A673 (cell line): ENCODE measurements at regions of chr1 and their contacts with region 1.

Region 1: GRCh38 chr1:19113697-19114092 is 96.4 kb downstream of the UBR4 start:
- DNase-seq: peak; percentile 48
- H3K4me3 ChIP-seq: no peak overlapping the region
- H3K27ac ChIP-seq: no peak overlapping the region
- H3K4me1 ChIP-seq: no peaks in the 10 kb centered on the region
- H3K27me3 ChIP-seq: no peaks in the 10 kb centered on the region
- CTCF ChIP-seq: peak; percentile 49

Region 2: DNA sequence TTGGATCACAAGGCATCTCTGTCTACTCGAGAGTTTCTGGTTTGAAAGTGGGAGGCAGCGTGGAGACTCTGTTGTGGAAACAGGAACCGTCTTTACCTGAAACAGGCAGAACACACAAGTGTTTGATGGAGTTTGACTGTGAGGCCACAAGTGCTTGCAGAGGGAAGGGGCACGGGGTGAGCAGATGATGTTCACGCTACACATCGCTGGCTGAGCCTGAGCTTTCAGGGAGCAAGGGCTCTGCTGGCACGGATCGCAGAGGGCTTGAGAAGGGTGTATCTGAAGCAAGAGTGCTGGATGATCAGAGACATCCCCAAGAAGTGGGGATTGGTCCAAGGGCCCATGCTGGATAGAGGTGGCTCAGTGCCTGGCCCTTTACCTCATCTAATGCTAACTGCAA is 946.8 kb before region 1 on chr1:
- CTCF ChIA-PET with region 1: no interaction called
- POLR2A ChIA-PET with region 1: no interaction called
- intact Hi-C with region 1: no loop called
- DNase-seq: no peak
- H3K4me3 ChIP-seq: no peak overlapping the region
- H3K27ac ChIP-seq: no peak overlapping the region
- H3K4me1 ChIP-seq: no peaks in the 10 kb centered on the region
- H3K27me3 ChIP-seq: no peaks in the 10 kb centered on the region
- CTCF ChIP-seq: no peak

Region 3: DNA sequence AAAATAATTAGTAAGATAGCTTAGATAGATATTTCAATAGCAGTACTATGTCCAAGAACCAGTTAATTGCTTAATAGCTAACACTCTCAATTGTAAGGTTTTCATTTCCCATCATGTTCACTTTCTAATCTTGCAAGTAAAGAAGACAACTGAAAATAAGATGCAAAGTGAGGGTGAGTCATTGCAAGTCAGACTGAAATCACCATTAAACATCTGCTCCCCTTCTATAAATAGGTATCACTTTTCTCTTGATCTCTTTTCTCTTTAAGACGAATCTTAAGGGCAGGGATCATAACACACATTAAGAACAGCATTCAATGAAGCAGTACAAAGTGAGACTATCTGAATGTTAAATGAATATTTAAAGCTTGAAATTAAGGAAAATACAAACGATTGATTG is 55.9 kb after region 1 on chr1:
- CTCF ChIA-PET with region 1: no interaction called
- POLR2A ChIA-PET with region 1: no interaction called
- intact Hi-C with region 1: loop called (anchors 10 kb)
- DNase-seq: no peak
- H3K4me3 ChIP-seq: no peak overlapping the region
- H3K27ac ChIP-seq: no peak overlapping the region
- H3K4me1 ChIP-seq: no peaks in the 10 kb centered on the region
- H3K27me3 ChIP-seq: no peaks in the 10 kb centered on the region
- CTCF ChIP-seq: no peak